Endothelial cell of umbilical vein (primary cell): ENCODE measurements at regions of chr7 and their contacts with region 1.

Region 1: GRCh38 chr7:36037121-36037662 is 115.9 kb upstream of the EEPD1 start:
- DNase-seq: peak; percentile 98
- H3K4me3 ChIP-seq: peak overlapping the region in 1 of 3 experiments; percentile 9
- H3K27ac ChIP-seq: peak overlapping the region; percentile 78
- H3K4me1 ChIP-seq: peaks cover 41% of the 10 kb centered on the region
- H3K27me3 ChIP-seq: peaks cover 7 to 10% of the 10 kb centered on the region in 2 experiments
- CTCF ChIP-seq: no peak
- POLR2A ChIP-seq: no peak

Region 2: GRCh38 chr7:35694781-35695472 is 342.3 kb before region 1 on chr7 and contains the start of gene HERPUD2:
- CTCF ChIA-PET with region 1: no interaction called
- POLR2A ChIA-PET with region 1: no interaction called
- dilution Hi-C with region 1: no loop called
- intact Hi-C with region 1: loop called (anchors 5 kb)
- DNase-seq: peak; percentile 91
- H3K4me3 ChIP-seq: peak within 1 kb of the TSS; percentile 53 to 81 (median 73)
- H3K27ac ChIP-seq: peak within 1 kb of the TSS; percentile 83
- H3K4me1 ChIP-seq: peaks cover 47% of the 10 kb centered on the region
- H3K27me3 ChIP-seq: no peaks in the 10 kb centered on the region
- CTCF ChIP-seq: no peak
- POLR2A ChIP-seq: peak; percentile 94
- total RNA-seq, gene HERPUD2: 27.7 and 33.9 TPM in 2 replicates

Region 3: GRCh38 chr7:35985126-35985754 is 52.0 kb before region 1 on chr7:
- CTCF ChIA-PET with region 1: interaction called, 3 read pairs
- POLR2A ChIA-PET with region 1: no interaction called
- dilution Hi-C with region 1: no loop called
- intact Hi-C with region 1: loop called (anchors 2 kb)
- DNase-seq: peak; percentile 67
- H3K4me3 ChIP-seq: no peak overlapping the region
- H3K27ac ChIP-seq: no peak overlapping the region
- H3K4me1 ChIP-seq: no peaks in the 10 kb centered on the region
- H3K27me3 ChIP-seq: no peaks in the 10 kb centered on the region
- CTCF ChIP-seq: peak; percentile 87 to 90
- POLR2A ChIP-seq: no peak

Region 4: GRCh38 chr7:36119005-36119706 is 82.0 kb after region 1 on chr7:
- CTCF ChIA-PET with region 1: no interaction called
- POLR2A ChIA-PET with region 1: no interaction called
- dilution Hi-C with region 1: no loop called
- intact Hi-C with region 1: no loop called
- DNase-seq: peak; percentile 22
- H3K4me3 ChIP-seq: no peak overlapping the region
- H3K27ac ChIP-seq: no peak overlapping the region
- H3K4me1 ChIP-seq: peaks cover 14% of the 10 kb centered on the region
- H3K27me3 ChIP-seq: no peaks in the 10 kb centered on the region
- CTCF ChIP-seq: no peak
- POLR2A ChIP-seq: no peak

Region 5: DNA sequence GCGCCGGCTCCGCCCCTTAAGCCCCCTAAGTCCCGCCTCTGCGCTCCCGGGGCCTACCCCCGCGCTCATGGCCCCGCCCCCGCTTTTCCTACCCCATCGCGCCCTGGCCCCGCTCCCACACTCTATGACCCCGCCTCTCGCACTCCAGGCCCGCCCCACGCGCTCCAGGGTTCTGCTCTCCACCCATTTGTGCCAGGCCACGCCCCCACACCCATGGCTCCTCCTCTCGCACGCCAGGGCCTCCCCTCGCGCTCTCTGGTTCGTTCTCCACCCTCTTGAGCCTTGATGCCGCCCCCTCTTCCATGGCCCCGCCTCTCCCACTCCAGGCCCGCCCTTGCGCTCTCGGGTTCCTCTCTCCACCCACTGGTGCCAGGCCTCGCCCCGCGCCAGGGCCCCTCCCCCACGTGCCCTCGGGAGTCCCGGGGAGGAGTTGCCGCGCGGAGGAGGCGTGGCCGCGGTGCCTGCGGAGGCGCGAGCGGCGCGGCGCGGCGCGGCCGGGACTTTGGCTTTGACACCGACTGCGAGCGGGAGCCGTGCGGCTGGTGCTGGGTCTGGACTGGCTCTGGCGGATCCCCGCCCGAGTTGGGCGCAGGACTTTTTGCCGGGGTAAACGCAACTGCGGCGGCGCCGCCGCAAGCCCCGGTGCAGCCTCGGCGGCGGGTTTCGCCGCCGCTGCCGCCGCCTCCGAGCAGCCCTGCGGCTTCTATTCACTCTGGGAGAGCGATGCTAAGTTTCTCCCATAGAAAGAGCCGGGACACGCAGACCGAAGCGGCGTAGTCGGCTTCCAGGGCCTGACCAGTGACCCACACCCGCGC is 115.8 kb after region 1 on chr7 and contains the start of gene EEPD1:
- CTCF ChIA-PET with region 1: no interaction called
- POLR2A ChIA-PET with region 1: no interaction called
- dilution Hi-C with region 1: no loop called
- intact Hi-C with region 1: loop called (anchors 1 kb)
- DNase-seq: peak; percentile 99
- H3K4me3 ChIP-seq: peak within 1 kb of the TSS; percentile 51 to 60 (median 57)
- H3K27ac ChIP-seq: no peak within 1 kb of the TSS
- H3K4me1 ChIP-seq: peaks cover 4% of the 10 kb centered on the region
- H3K27me3 ChIP-seq: peaks cover 0 to 3% of the 10 kb centered on the region in 2 experiments
- CTCF ChIP-seq: no peak
- POLR2A ChIP-seq: no peak
- total RNA-seq, gene EEPD1: 0.23 and 0.42 TPM in 2 replicates

Region 6: DNA sequence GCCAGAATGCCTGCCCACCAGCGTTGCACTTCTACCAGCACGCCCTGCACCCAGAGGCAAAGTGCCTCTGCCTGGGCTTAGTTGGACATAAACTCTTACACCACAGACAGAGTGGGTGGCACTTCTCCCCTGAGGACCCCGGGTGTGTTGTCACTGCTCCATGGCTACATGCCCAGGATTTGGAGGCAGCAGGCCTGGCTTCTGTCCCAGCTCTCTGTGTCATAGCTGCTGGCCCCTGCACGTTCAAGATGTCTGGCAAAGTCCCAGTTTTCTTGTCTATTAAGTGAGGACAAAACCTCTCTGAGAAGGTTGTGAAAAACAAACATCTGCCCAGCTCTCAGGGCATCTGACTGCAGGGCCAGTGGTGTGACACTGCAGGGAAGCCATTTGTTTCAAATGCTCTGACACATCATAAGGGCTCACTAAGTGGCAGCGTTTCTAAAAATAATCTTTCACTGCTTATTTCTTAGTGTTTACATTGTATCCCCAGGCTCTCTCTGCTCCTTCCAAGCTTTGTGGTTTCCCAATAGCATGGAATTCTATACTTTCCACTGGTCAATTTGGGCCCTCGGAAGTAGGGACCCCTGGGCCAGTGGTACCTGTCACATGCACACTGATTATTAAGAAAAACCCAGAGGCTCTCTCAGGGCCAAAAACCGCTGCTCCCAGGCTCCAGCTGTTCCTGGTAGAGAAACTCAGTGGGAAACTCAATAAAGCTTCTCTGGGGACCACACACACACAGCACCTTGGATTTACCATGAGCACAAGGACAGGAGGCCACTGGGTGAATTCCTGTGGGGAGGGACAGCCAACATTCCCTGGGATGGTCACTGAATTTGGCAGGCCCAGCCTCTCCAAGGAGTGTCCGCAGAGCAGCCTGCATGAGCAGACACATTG is 266.3 kb after region 1 on chr7:
- CTCF ChIA-PET with region 1: no interaction called
- POLR2A ChIA-PET with region 1: no interaction called
- dilution Hi-C with region 1: no loop called
- intact Hi-C with region 1: loop called (anchors 1 kb)
- DNase-seq: peak; percentile 54
- H3K4me3 ChIP-seq: no peak overlapping the region
- H3K27ac ChIP-seq: peak overlapping the region; percentile 33
- H3K4me1 ChIP-seq: peaks cover 28% of the 10 kb centered on the region
- H3K27me3 ChIP-seq: no peaks in the 10 kb centered on the region
- CTCF ChIP-seq: no peak
- POLR2A ChIP-seq: no peak

Region 7: DNA sequence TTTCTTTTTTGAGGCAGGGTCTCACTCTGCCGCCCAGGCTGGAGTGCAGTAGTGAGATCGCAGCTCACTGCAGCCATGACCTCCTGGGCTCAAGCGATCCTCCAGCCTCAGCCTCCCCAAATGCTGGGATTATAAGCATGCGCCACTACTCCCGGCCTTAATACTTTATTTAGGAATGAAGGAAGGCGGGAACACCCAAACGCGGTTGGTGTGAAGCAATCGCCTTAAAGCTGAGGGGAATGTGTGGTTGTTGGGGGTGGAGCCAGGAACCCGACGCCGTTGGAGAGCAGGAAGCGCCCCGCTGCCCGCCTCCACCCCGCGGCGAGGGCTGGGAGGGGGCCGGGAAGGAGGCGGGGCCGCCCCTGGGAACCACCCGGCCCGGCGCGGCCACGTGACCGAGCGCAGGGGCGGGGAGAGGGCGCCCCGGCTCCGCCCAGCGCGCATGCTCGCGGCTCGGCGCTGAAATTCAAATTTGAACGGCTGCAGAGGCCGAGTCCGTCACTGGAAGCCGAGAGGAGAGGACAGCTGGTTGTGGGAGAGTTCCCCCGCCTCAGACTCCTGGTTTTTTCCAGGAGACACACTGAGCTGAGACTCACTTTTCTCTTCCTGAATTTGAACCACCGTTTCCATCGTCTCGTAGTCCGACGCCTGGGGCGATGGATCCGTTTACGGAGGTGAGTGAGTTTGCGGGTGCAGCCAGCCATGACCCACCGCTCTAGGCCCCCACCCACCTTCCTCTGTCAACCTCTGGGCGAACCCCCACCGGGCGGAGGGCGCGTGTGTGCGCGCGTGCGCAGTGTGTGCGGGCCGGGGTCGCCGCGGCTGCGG is 352.4 kb after region 1 on chr7 and contains the start of gene ANLN:
- CTCF ChIA-PET with region 1: no interaction called
- POLR2A ChIA-PET with region 1: no interaction called
- dilution Hi-C with region 1: no loop called
- intact Hi-C with region 1: loop called (anchors 10 kb)
- DNase-seq: peak; percentile 86
- H3K4me3 ChIP-seq: peak within 1 kb of the TSS; percentile 57 to 91 (median 87)
- H3K27ac ChIP-seq: peak within 1 kb of the TSS; percentile 63
- H3K4me1 ChIP-seq: peaks cover 31% of the 10 kb centered on the region
- H3K27me3 ChIP-seq: peaks cover 0 to 2% of the 10 kb centered on the region in 2 experiments
- CTCF ChIP-seq: no peak
- POLR2A ChIP-seq: peak; percentile 49
- total RNA-seq, gene ANLN: 112 and 119 TPM in 2 replicates